Ascending aorta (tissue), 2 donors: ENCODE measurements at regions of chr15 and their contacts with region 1.

Region 1: DNA sequence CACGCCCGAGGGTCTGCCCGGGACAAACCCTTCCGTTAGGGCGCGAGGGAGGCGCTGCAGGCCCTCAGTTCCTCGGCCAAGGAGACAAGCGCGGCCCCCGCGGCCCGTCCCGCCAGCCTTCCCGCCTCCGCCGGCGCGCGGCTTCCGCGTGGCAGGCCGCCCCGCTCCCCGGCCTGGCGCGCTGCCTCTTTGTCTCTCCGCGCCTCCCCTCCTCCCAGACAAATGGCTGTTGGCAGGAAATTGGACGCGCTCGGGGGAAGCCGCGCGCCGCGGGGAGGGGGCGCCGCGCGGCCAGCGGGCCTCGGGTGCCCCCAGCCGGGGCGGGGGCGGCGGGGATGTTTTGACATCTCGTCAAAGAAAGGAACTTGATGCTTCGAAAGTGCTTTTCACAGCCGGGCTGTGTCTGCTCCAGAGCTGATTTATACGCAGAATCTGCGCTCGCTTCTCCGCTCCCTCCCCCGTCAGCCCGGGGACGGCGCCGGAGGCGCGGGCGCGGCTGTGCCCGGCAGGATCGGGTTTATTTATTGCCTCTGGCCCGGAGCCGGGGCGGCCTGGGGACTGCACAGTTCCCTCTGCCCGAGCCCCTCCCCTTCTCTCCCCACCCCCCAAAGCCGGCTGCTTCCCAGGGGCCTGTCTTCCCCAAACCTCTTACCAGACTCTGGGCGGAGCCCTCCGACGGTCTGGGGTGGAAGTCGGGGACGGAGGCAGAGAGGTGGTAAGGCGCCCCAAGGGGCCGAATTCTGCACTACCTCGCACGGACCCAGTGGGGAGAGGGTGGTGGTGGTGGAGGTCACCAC is 20.7 kb downstream of the SHF start:
- DNase-seq: peak; percentile 49 to 93
- H3K4me3 ChIP-seq: peak overlapping the region; percentile 78 to 97
- H3K27ac ChIP-seq: peak overlapping the region; percentile 97 to 99
- H3K4me1 ChIP-seq: peaks cover 0 to 14% of the 10 kb centered on the region in 2 donors
- H3K27me3 ChIP-seq: no peaks in the 10 kb centered on the region
- CTCF ChIP-seq: peak; percentile 40 to 74 (median 62)

Region 2: GRCh38 chr15:45187894-45188830 is 21.1 kb after region 1 on chr15 and contains the start of gene SHF:
- intact Hi-C with region 1: loop called (anchors 1 kb)
- DNase-seq: peak in 1 of 2 donors; percentile 86
- H3K4me3 ChIP-seq: peak within 1 kb of the TSS; percentile 79 to 94
- H3K27ac ChIP-seq: peak within 1 kb of the TSS; percentile 89 to 98
- H3K4me1 ChIP-seq: peaks cover 0 to 5% of the 10 kb centered on the region in 2 donors
- H3K27me3 ChIP-seq: no peaks in the 10 kb centered on the region
- CTCF ChIP-seq: no peak
- total RNA-seq, gene SHF: 75.0 TPM

Region 3: GRCh38 chr15:45221967-45222366 is 54.9 kb after region 1 on chr15:
- intact Hi-C with region 1: no loop called
- DNase-seq: no peak
- H3K4me3 ChIP-seq: no peak overlapping the region
- H3K27ac ChIP-seq: no peak overlapping the region
- H3K4me1 ChIP-seq: no peaks in the 10 kb centered on the region
- H3K27me3 ChIP-seq: no peaks in the 10 kb centered on the region
- CTCF ChIP-seq: no peak

Region 4: DNA sequence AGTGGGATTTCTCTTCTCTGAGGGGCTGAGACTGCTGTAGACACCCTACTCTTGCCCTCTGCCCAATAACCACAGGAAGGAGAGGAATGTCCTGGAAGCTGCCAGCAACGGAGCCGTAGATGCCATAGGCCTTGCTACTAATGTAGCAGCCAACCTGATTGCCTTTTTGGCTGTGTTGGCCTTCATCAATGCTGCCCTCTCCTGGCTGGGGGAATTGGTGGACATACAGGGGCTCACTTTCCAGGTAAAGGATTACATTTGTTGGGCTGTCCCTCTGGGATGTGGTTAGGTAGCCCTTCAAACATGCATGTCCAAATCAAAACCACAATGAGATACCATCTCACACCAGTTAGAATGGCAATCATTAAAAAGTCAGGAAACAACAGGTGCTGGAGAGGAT is 101.1 kb after region 1 on chr15:
- intact Hi-C with region 1: no loop called
- DNase-seq: no peak
- H3K4me3 ChIP-seq: no peak overlapping the region
- H3K27ac ChIP-seq: no peak overlapping the region
- H3K4me1 ChIP-seq: no peaks in the 10 kb centered on the region
- H3K27me3 ChIP-seq: no peaks in the 10 kb centered on the region
- CTCF ChIP-seq: no peak

Region 5: GRCh38 chr15:45279024-45279698 is 112.1 kb after region 1 on chr15:
- intact Hi-C with region 1: loop called (anchors 1 kb)
- DNase-seq: peak; percentile 91 to 99
- H3K4me3 ChIP-seq: peak overlapping the region; percentile 64 to 71
- H3K27ac ChIP-seq: peak overlapping the region; percentile 82 to 86
- H3K4me1 ChIP-seq: peaks cover 0 to 11% of the 10 kb centered on the region in 2 donors
- H3K27me3 ChIP-seq: no peaks in the 10 kb centered on the region
- CTCF ChIP-seq: no peak

Region 6: GRCh38 chr15:45378149-45378912 is 211.3 kb after region 1 on chr15 and contains the start of gene GATM:
- intact Hi-C with region 1: loop called (anchors 5 kb)
- DNase-seq: peak; percentile 43 to 89
- H3K4me3 ChIP-seq: peak within 1 kb of the TSS; percentile 61 to 72
- H3K27ac ChIP-seq: peak within 1 kb of the TSS; percentile 75 to 77
- H3K4me1 ChIP-seq: peaks cover 3 to 5% of the 10 kb centered on the region in 2 donors
- H3K27me3 ChIP-seq: no peaks in the 10 kb centered on the region
- CTCF ChIP-seq: peak; percentile 26 to 61 (median 49)
- total RNA-seq, gene GATM: 6.1 TPM

Region 7: GRCh38 chr15:45402162-45402954 is 235.3 kb after region 1 on chr15:
- intact Hi-C with region 1: loop called (anchors 1 kb)
- DNase-seq: peak; percentile 80 to 97
- H3K4me3 ChIP-seq: peak overlapping the region; percentile 92 to 94
- H3K27ac ChIP-seq: peak overlapping the region; percentile 85 to 92
- H3K4me1 ChIP-seq: peaks cover 3 to 18% of the 10 kb centered on the region in 2 donors
- H3K27me3 ChIP-seq: no peaks in the 10 kb centered on the region
- CTCF ChIP-seq: peak in 1 of 3 experiments; percentile 14